Stomach (tissue), 19 donors: ENCODE measurements at regions of chr1 and their contacts with region 1.

Region 1: GRCh38 chr1:152182431-152182830 is 23.4 kb upstream of the RPTN start:
- DNase-seq: no peak
- H3K4me3 ChIP-seq: no peak overlapping the region
- H3K27ac ChIP-seq: no peak overlapping the region
- H3K4me1 ChIP-seq: no peaks in the 10 kb centered on the region
- H3K27me3 ChIP-seq: no peaks in the 10 kb centered on the region
- CTCF ChIP-seq: peak in 1 of 7 experiments; percentile 20
- EP300 ChIP-seq: no peak
- POLR2A ChIP-seq: no peak

Region 2: GRCh38 chr1:152052606-152053005 is 129.8 kb before region 1 on chr1:
- intact Hi-C with region 1: loop called (anchors 2 kb)
- DNase-seq: peak; percentile 92
- H3K4me3 ChIP-seq: no peak overlapping the region
- H3K27ac ChIP-seq: no peak overlapping the region
- H3K4me1 ChIP-seq: peaks cover 14 to 49% (median 16%) of the 10 kb centered on the region in 4 donors
- H3K27me3 ChIP-seq: peaks cover 0 to 20% (median 0%) of the 10 kb centered on the region in 3 donors
- CTCF ChIP-seq: peak in 5 of 7 experiments; percentile 78 to 92 (median 91)
- EP300 ChIP-seq: no peak
- POLR2A ChIP-seq: no peak

Region 3: GRCh38 chr1:152127670-152128069 is 54.8 kb before region 1 on chr1:
- intact Hi-C with region 1: no loop called
- DNase-seq: no peak
- H3K4me3 ChIP-seq: no peak overlapping the region
- H3K27ac ChIP-seq: no peak overlapping the region
- H3K4me1 ChIP-seq: no peaks in the 10 kb centered on the region
- H3K27me3 ChIP-seq: peaks cover 0 to 61% (median 16%) of the 10 kb centered on the region in 3 donors
- CTCF ChIP-seq: no peak
- EP300 ChIP-seq: no peak
- POLR2A ChIP-seq: no peak

Region 4: GRCh38 chr1:152374451-152374850 is 192.0 kb after region 1 on chr1:
- intact Hi-C with region 1: no loop called
- DNase-seq: no peak
- H3K4me3 ChIP-seq: no peak overlapping the region
- H3K27ac ChIP-seq: no peak overlapping the region
- H3K4me1 ChIP-seq: no peaks in the 10 kb centered on the region
- H3K27me3 ChIP-seq: no peaks in the 10 kb centered on the region
- CTCF ChIP-seq: no peak
- EP300 ChIP-seq: no peak
- POLR2A ChIP-seq: no peak